ENCODE measurements at regions of chr13 and their contacts with region 1.

Region 1: GRCh38 chr13:79851318-79851717 is 370.4 kb downstream of the NDFIP2 start:
- DNase-seq: no peak
- H3K4me3 ChIP-seq: no peak overlapping the region
- H3K27ac ChIP-seq: no peak overlapping the region
- H3K4me1 ChIP-seq: no peaks in the 10 kb centered on the region
- H3K27me3 ChIP-seq: no peaks in the 10 kb centered on the region
- CTCF ChIP-seq: no peak

Region 2: DNA sequence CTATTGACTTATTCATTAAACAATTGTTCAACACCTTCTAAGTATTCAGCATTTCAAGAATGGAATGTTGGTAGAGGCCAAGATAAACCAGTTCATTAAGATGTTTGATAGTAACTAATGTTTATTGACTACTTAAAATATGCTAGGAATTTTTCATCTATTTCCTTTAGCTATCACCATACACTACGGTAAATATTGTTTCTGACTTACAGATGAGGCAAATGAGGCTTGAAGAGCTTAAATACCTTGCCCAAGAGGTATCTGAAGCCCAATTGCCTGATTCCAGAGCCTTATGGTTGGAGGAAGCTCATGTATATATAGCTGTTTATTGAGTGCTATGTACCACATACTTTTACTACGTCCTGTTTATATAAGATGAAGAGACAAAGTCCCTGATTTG is 84.2 kb before region 1 on chr13:
- CTCF ChIA-PET with region 1: no interaction called
- dilution Hi-C with region 1: no loop called
- in situ Hi-C with region 1: no loop called
- intact Hi-C with region 1: no loop called
- DNase-seq: no peak
- H3K4me3 ChIP-seq: no peak overlapping the region
- H3K27ac ChIP-seq: no peak overlapping the region
- H3K4me1 ChIP-seq: peaks cover 7% of the 10 kb centered on the region
- H3K27me3 ChIP-seq: no peaks in the 10 kb centered on the region
- CTCF ChIP-seq: no peak

Region 3: GRCh38 chr13:79988573-79988972 is 137.3 kb after region 1 on chr13:
- CTCF ChIA-PET with region 1: interaction called, 3 read pairs
- dilution Hi-C with region 1: no loop called
- in situ Hi-C with region 1: no loop called
- intact Hi-C with region 1: loop called (anchors 5 kb)
- DNase-seq: peak; percentile 74
- H3K4me3 ChIP-seq: no peak overlapping the region
- H3K27ac ChIP-seq: peak overlapping the region; percentile 99
- H3K4me1 ChIP-seq: peaks cover 49% of the 10 kb centered on the region
- H3K27me3 ChIP-seq: no peaks in the 10 kb centered on the region
- CTCF ChIP-seq: no peak